ENCODE measurements at regions of chr6 and their contacts with region 1.

Region 1: GRCh38 chr6:133553652-133554051 is 312.5 kb downstream of the EYA4 start:
- DNase-seq: peak; percentile 69 to 70
- H3K4me3 ChIP-seq: no peak overlapping the region
- H3K4me1 ChIP-seq: peaks cover 10% of the 10 kb centered on the region
- H3K27me3 ChIP-seq: no peaks in the 10 kb centered on the region

Region 2: DNA sequence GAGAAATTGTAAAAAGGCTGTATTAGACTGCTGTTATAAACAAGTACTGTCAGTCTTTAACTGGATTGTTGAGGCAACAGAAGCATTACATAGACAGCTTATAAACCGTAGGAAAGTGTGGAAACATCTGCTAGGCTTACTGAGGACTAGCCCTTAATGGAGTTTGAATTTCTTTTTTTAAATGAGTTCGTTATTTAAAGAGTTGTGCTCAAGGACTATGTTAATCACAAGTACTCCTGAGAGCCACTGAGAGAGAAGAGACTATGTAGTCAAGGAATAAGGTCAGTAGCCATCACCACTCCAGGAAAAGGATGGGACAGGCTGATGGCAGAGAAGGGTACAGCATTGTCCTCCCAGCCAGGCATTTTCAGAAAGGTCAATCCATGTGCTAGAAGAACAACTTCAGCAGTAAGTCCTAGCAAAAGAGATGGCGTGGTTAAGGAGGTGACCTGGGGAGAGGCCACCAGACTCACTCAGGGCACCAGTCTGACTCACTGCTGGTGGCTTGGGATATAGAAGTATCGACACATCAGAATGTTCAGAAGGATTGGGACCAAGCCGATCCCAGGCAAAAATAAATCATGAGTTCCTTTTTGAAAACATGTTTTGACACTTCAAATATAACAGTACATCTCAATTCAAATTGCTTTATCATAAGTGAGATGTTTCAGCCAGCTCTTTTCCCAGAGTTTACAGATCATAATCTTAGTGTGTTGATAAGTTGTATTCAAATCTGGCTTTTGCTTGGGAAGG is 732.8 kb before region 1 on chr6:
- in situ Hi-C with region 1: loop called (anchors 10 kb)
- DNase-seq: peak; percentile 42 to 47
- H3K4me3 ChIP-seq: no peak overlapping the region
- H3K4me1 ChIP-seq: peaks cover 34% of the 10 kb centered on the region
- H3K27me3 ChIP-seq: no peaks in the 10 kb centered on the region

Region 3: DNA sequence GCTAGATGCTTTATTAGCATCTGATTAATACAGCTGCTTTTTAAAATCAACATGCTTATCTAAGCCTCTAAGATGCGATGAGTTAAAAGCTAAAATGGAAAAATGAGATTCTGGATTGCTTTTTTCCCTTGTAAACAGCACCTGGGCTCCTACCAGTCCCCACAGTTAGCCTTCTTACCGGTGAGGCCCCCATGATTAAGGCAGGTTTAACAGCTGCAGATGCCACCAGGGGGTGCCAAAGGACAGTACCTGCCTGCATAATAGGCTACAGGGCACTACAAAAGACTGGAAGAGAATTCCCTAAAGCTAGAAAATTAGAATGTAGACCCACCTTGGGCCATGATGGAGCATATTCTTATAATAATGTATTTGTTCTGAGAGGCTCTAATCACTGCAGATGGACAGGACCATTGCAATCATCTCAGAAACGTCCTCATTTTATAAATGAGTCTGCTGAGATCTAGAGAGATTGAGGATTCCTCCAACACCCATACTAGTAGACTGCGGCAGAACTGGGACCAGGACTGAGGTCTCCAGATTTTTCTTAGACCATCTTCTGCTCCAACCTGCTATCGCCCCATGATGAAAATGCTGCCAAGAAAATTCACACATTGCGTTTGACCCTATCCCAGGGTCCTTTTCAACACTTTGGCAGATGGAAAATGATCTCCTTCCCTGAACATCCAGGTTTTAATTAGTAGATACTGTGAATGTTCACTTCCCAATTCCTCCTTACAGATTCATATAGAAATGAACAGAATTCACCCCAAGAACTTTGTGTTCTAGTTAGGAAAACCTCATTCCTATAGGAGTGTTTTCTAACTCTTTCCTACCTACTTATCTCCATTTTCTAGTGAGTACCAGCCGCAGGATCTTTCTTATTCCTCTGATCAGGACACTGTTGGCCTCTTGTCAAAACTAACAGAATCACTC is 590.5 kb before region 1 on chr6:
- in situ Hi-C with region 1: loop called (anchors 10 kb)
- DNase-seq: peak; percentile 74 to 91
- H3K4me3 ChIP-seq: no peak overlapping the region
- H3K4me1 ChIP-seq: peaks cover 11% of the 10 kb centered on the region
- H3K27me3 ChIP-seq: no peaks in the 10 kb centered on the region

Region 4: GRCh38 chr6:133337312-133337711 is 216.3 kb before region 1 on chr6:
- in situ Hi-C with region 1: no loop called
- DNase-seq: no peak
- H3K4me3 ChIP-seq: no peak overlapping the region
- H3K4me1 ChIP-seq: peaks cover 7% of the 10 kb centered on the region
- H3K27me3 ChIP-seq: no peaks in the 10 kb centered on the region

Region 5: DNA sequence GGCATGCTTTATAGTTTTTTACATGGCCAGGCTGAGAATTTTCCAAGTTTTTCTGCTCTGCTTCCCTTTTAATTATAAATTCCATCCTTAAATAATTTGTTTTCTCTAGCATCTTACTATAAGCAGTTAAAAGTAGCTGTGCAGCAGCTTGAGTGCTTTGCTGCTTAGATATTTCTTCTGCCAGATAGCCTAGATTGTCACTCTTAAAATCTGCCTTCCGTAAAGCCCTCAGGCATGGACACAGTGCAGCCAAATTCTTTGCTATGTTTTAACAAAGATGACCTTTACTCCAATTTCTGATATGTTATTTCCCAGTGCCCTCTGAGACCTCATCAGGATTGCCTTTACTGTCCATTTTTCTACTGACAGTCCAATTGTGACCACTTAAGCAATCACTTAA is 856.9 kb after region 1 on chr6:
- in situ Hi-C with region 1: no loop called
- DNase-seq: no peak
- H3K4me3 ChIP-seq: no peak overlapping the region
- H3K4me1 ChIP-seq: no peaks in the 10 kb centered on the region
- H3K27me3 ChIP-seq: no peaks in the 10 kb centered on the region

Measured in HAP-1 (cell line).